ENCODE measurements at regions of chr17 and their contacts with region 1.

Region 1: DNA sequence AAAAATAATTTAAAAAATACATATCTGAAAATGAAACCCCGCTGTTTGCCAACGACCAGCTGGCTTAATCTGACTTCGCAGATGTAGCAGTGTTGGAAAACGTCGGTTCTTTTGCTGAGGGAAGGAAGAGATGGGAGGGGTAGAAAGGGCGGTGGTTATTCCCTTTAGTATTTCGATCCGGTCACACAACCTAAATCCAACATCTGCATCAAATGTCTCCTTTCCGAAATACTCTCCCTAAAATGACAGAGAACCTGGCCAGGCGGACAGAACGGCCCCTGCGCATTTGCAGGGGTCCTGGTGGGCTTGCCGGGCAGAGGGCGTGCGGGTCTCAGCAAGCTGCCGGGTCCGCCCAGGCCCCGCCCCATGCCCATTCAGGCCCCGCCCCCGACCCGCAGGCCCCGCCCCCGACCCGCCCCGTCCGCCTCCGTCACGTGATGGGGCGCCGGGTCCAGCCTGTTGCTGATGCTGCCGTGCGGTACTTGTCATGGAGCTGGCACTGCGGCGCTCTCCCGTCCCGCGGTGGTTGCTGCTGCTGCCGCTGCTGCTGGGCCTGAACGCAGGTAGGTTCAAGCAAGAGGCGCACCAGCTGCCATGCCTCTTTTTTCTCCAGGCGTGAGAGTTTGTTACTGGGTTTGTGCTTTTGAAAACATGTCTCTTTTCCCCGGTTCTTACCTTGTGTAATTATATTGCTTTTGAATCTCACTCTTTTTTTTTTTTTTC is at the start of gene SCPEP1:
- DNase-seq: peak; percentile 89
- H3K4me3 Mint-ChIP-seq: peak within 1 kb of the TSS; percentile 94
- H3K27ac Mint-ChIP-seq: peak within 1 kb of the TSS; percentile 77
- H3K4me1 Mint-ChIP-seq: peaks cover 18% of the 10 kb centered on the region
- H3K27me3 Mint-ChIP-seq: no peaks in the 10 kb centered on the region
- total RNA-seq, gene SCPEP1: 17.9 to 24.9 TPM

Region 2: GRCh38 chr17:56786989-56787482 is 190.8 kb before region 1 on chr17:
- CTCF ChIA-PET with region 1: no interaction called
- POLR2A ChIA-PET with region 1: no interaction called
- intact Hi-C with region 1: no loop called
- DNase-seq: peak; percentile 83
- H3K4me3 Mint-ChIP-seq: peak overlapping the region; percentile 33
- H3K27ac Mint-ChIP-seq: peak overlapping the region; percentile 88
- H3K4me1 Mint-ChIP-seq: peaks cover 33% of the 10 kb centered on the region
- H3K27me3 Mint-ChIP-seq: no peaks in the 10 kb centered on the region

Region 3: GRCh38 chr17:56866496-56866895 is 111.3 kb before region 1 on chr17:
- CTCF ChIA-PET with region 1: no interaction called
- POLR2A ChIA-PET with region 1: no interaction called
- intact Hi-C with region 1: no loop called
- DNase-seq: no peak
- H3K4me3 Mint-ChIP-seq: no peak overlapping the region
- H3K27ac Mint-ChIP-seq: no peak overlapping the region
- H3K4me1 Mint-ChIP-seq: peaks cover 9% of the 10 kb centered on the region
- H3K27me3 Mint-ChIP-seq: no peaks in the 10 kb centered on the region

Region 4: GRCh38 chr17:56960596-56961538 is 17.0 kb before region 1 on chr17 and contains the start of gene COIL:
- CTCF ChIA-PET with region 1: interaction called, 6 read pairs
- POLR2A ChIA-PET with region 1: interaction called, 3 read pairs
- intact Hi-C with region 1: loop called (anchors 1 kb)
- DNase-seq: peak; percentile 95
- H3K4me3 Mint-ChIP-seq: peak within 1 kb of the TSS; percentile 80
- H3K27ac Mint-ChIP-seq: peak within 1 kb of the TSS; percentile 85
- H3K4me1 Mint-ChIP-seq: peaks cover 26% of the 10 kb centered on the region
- H3K27me3 Mint-ChIP-seq: no peaks in the 10 kb centered on the region
- total RNA-seq, gene COIL: 16.9 TPM

Region 5: GRCh38 chr17:57009737-57010445 is 32.1 kb after region 1 on chr17:
- CTCF ChIA-PET with region 1: interaction called, 5 read pairs
- POLR2A ChIA-PET with region 1: no interaction called
- intact Hi-C with region 1: loop called (anchors 5 kb)
- DNase-seq: peak; percentile 72
- H3K4me3 Mint-ChIP-seq: no peak overlapping the region
- H3K27ac Mint-ChIP-seq: no peak overlapping the region
- H3K4me1 Mint-ChIP-seq: peaks cover 7% of the 10 kb centered on the region
- H3K27me3 Mint-ChIP-seq: peaks cover 4% of the 10 kb centered on the region

Region 6: DNA sequence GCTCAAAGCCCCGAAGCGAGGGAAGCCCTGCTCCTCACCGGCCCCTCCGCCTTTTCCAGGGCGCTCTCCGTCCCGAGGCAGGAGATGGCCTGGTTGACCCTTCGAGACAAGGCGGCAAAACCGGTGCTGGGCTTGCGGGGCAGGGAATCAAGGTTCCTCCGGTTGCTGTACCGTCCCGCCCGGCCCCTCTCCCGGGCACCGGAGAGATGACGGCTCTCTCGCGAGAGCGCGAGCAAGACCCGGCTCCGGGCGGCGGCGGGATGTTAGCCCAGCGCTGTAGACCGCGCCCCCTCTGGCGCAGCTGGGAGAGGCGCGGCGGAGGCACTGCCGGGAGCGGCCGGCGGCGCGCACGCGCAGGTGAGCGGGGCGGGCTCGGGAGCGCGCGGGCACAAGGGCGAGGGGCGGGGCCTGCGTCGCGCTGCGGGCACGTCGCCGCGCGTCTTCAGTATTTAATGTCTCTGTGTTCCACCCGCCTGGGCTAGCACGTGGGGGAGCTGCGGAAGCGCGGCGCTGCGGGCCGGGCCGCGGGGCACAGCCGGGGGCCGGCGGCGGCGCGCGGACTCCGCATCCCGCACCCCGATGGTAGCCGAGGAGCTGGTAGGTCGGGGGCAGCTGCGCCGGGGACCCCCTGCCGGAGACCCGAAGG is 107.1 kb after region 1 on chr17 and contains the start of gene AKAP1:
- CTCF ChIA-PET with region 1: no interaction called
- POLR2A ChIA-PET with region 1: interaction called, 6 read pairs
- intact Hi-C with region 1: loop called (anchors 1 kb)
- DNase-seq: peak; percentile 96
- H3K4me3 Mint-ChIP-seq: peak within 1 kb of the TSS; percentile 82
- H3K27ac Mint-ChIP-seq: peak within 1 kb of the TSS; percentile 84
- H3K4me1 Mint-ChIP-seq: peaks cover 38% of the 10 kb centered on the region
- H3K27me3 Mint-ChIP-seq: no peaks in the 10 kb centered on the region
- total RNA-seq, gene AKAP1: 24.5 to 30.8 TPM

Measured in activated CD4-positive, alpha-beta memory T cell treated with anti-CD3 and anti-CD28 coated beads for 36 hours (primary cell).